Pancreas (tissue), 10 donors: ENCODE measurements at regions of chr20 and their contacts with region 1.

Region 1: DNA sequence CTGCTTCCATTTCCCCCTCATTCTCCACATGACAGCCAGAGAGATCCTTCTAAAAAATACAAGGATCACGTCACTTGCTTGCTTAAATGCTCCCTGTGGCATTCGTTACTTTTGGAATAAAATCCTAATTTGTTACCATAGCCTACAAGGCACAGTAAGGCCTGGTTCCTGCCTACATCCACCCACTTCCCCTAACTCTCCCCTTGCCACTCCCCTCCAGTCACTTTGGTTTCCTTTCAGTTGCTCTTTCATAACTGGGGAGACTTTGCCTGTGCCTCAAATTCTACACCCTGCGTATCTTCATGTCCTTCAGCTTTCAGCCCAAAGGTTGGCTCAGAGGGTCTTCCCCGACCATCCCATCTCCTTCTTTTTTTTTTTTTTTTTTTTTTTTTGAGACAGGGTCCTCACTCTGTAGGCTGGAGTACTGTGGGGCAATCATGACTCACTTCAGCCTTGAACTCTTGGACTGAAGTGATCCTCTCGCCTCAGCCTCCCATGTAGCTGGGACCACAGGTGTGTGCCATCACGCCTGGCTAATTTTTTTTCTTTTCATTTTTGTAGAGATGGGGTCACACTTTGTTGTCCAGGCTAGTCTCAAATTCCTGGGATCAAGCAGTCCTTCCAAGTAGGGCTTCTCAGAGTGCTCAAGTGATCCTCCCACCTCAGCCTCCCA is 12.5 kb downstream of the ID1 start:
- DNase-seq: no peak
- ATAC-seq: no peak
- H3K4me3 ChIP-seq: no peak overlapping the region
- H3K27ac ChIP-seq: no peak overlapping the region
- H3K4me1 ChIP-seq: peaks cover 0 to 4% (median 0%) of the 10 kb centered on the region in 3 donors
- H3K27me3 ChIP-seq: no peaks in the 10 kb centered on the region
- CTCF ChIP-seq: no peak

Region 2: GRCh38 chr20:31560094-31560899 is 57.3 kb before region 1 on chr20:
- intact Hi-C with region 1: loop called (anchors 5 to 10 kb)
- DNase-seq: peak in 4 of 6 donors; percentile 39 to 77 (median 62)
- ATAC-seq: peak; percentile 36 to 65 (median 58)
- H3K4me3 ChIP-seq: no peak overlapping the region
- H3K27ac ChIP-seq: peak overlapping the region in 1 of 4 donors; percentile 52
- H3K4me1 ChIP-seq: no peaks in the 10 kb centered on the region
- H3K27me3 ChIP-seq: no peaks in the 10 kb centered on the region
- CTCF ChIP-seq: peak; percentile 64 to 80 (median 73)

Region 3: GRCh38 chr20:31788578-31788977 is 171.0 kb after region 1 on chr20:
- intact Hi-C with region 1: no loop called
- DNase-seq: no peak
- ATAC-seq: no peak
- H3K4me3 ChIP-seq: no peak overlapping the region
- H3K27ac ChIP-seq: no peak overlapping the region
- H3K4me1 ChIP-seq: no peaks in the 10 kb centered on the region
- H3K27me3 ChIP-seq: no peaks in the 10 kb centered on the region
- CTCF ChIP-seq: no peak